ENCODE measurements at regions of chr17 and their contacts with region 1.

Region 1: DNA sequence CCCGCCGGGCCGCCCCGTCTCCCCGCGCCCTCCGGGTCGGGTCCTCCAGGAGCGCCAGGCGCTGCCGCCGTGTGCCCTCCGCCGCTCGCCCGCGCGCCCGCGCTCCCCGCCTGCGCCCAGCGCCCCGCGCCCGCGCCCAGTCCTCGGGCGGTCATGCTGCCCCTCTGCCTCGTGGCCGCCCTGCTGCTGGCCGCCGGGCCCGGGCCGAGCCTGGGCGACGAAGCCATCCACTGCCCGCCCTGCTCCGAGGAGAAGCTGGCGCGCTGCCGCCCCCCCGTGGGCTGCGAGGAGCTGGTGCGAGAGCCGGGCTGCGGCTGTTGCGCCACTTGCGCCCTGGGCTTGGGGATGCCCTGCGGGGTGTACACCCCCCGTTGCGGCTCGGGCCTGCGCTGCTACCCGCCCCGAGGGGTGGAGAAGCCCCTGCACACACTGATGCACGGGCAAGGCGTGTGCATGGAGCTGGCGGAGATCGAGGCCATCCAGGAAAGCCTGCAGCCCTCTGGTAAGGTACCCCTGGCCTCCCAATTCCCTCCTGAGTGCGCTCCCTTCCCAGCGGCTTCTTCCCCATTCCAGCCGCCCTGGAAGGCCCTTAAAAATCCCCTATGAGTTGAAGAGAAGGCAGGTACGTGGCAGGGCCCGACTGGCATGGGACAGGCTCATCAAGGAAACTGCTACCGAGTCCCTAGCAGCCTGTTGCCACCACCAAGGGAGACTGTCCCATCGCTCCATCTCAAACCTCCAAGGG is 505 bp downstream of the IGFBP4 start:
- DNase-seq: peak; percentile 76 to 96 (median 85)
- H3K4me3 ChIP-seq: peak overlapping the region; percentile 66 to 95 (median 83)
- H3K27ac ChIP-seq: peak overlapping the region; percentile 91 to 96
- H3K4me1 ChIP-seq: peaks cover 3 to 23% (median 23%) of the 10 kb centered on the region in 3 donors
- H3K27me3 ChIP-seq: no peaks in the 10 kb centered on the region
- CTCF ChIP-seq: peak; percentile 35

Region 2: GRCh38 chr17:40536295-40537171 is 92.8 kb after region 1 on chr17:
- intact Hi-C with region 1: loop called (anchors 10 kb)
- DNase-seq: peak in 1 of 5 donors; percentile 81
- H3K4me3 ChIP-seq: no peak overlapping the region
- H3K27ac ChIP-seq: peak overlapping the region; percentile 60 to 80
- H3K4me1 ChIP-seq: peaks cover 2 to 54% (median 33%) of the 10 kb centered on the region in 3 donors
- H3K27me3 ChIP-seq: no peaks in the 10 kb centered on the region
- CTCF ChIP-seq: no peak

Measured in kidney (tissue), 22 donors.